ENCODE measurements at regions of chr3 and their contacts with region 1.

Region 1: DNA sequence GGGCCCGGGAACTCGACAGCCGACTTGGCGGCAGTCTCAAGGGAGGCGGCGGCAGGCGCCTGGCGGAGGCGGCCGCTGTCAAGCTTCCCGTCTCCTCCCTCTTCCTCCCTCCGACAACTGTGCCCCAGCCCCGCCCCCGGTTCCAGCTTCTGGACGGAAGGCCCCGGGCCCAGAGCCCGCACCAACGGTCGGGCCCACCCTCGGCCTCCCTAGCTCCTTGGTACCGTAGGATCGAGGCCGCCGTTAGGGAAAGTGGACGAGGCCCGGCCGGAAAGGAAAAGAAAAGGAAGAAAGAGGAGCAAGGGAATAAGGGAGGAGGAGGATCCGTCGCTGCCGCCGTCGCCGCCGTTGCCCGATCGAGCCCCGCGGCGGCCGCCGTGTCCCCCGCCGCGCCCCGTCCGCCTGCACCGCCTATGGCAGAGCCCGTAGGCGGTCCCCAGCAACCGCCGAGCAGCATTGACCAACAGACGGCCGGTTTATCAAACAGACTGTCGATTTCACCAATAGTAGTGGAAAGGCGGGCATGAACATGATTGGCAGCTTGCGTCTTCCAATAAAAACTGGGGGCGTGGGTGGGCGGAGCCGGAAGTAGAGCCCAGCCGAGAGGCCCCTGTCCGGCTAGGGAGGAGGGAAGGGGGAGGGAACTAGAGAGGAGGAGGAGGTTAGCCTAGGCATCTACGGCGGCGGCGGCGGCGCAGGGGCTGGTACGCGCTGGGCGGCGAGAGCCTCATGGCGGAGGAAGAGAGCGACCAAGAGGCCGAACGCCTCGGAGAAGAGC is at the starts of genes CGGBP1 and ZNF654:
- DNase-seq: peak; percentile 97
- ATAC-seq: peak; percentile 98
- total RNA-seq, gene CGGBP1: 51.6 TPM
- total RNA-seq, gene ZNF654: 11.9 TPM

Region 2: GRCh38 chr3:88031642-88032077 is 27.1 kb before region 1 on chr3:
- intact Hi-C with region 1: loop called (anchors 1 kb)
- DNase-seq: no peak
- ATAC-seq: peak; percentile 28

Region 3: GRCh38 chr3:88113311-88114162 is 54.8 kb after region 1 on chr3:
- intact Hi-C with region 1: loop called (anchors 2 kb)
- DNase-seq: no peak
- ATAC-seq: peak; percentile 60

Region 4: DNA sequence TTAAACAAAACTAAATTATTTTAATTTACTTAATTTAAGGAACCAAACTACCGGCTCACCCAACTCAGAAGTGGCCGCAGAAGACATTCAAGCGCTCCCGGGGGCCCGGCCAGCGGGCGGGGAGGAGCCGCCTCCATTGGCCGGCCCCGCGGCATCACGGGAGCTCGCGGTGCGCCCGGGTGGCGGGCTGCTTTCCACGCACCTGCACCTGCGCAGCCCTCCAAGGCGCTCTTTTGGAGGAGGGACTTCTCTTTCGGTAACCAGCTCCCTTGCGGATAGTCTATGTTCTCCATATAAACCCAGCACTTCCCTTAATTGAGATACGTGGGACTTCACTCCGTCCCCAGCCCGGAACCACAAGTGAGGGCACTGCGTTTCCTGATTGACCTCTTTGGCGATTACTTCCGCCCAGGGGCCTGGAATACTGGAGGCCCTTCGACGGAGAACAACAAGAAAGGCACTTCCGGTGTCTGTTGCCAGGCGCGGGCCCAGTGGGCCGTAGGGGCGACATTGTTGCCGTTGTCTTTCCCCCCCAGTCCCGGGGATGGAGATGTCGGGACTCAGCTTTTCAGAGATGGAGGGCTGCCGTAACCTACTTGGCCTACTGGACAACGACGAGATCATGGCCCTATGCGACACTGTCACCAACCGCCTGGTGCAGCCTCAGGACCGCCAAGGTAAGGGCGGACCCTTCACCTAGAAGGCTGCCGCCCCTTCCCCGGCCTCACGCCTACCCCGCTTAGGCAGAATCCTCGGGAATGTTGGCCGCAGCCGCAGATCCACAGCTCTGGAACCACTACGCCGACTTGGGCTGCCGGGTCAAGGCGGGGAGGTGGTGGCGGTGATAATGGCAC is 91.0 kb after region 1 on chr3 and contains the start of gene C3orf38:
- intact Hi-C with region 1: loop called (anchors 5 kb)
- DNase-seq: peak; percentile 92
- ATAC-seq: peak; percentile 98
- total RNA-seq, gene C3orf38: 11.8 TPM

Measured in Right ventricle myocardium inferior (tissue), 1 donor.